Sigmoid colon (tissue), 7 donors: ENCODE measurements at regions of chr10 and their contacts with region 1.

Region 1: DNA sequence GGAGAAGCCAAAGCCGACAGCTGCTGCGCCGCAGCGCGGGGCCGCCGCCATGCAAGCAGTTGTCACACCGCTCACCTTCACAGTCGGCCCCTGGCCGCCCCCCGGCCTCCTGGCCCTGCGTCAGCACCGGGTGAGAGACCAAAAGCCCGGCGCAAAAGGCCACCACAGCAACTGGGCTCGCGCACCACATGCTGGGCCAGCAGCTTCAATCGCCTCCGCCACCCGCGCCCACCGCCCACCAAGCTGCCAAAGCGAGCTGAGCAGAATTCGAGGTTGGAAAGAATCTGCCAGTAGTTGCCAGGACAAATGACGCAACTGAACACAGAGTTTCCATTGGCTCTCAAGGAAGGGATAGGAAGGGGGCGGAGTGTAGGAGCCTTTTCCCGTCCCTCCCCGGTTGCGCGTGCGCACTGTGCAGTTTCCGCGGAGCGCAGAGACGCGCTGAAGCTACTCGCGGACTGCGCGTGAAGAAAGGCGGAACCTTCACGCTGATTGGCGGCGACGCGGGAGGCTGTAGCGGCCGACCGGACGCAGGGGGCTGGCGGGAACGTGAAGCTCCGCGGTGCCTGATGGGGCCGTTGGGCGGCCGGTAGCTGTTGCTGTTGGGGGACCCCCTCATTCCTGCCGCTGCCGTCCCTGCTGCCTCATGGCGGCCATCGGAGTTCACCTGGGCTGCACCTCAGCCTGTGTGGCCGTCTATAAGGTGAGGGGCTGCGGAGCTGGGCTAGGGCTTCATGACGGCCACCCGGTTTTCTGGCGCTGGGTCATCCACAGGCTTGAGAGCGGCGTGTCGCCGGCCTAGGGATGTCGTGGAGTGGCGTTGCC is at the starts of genes CDNF, HSPA14 and MSANTD7:
- DNase-seq: peak; percentile 100
- H3K4me3 ChIP-seq: peak within 1 kb of the TSS; percentile 86 to 95 (median 90)
- H3K27ac ChIP-seq: peak within 1 kb of the TSS; percentile 90 to 96 (median 95)
- H3K4me1 ChIP-seq: peaks cover 0 to 27% (median 17%) of the 10 kb centered on the region in 4 donors
- H3K27me3 ChIP-seq: no peaks in the 10 kb centered on the region
- CTCF ChIP-seq: no peak
- EP300 ChIP-seq: peak in 1 of 4 donors; percentile 52
- POLR2A ChIP-seq: peak; percentile 58 to 75
- total RNA-seq, gene CDNF: 1.5 to 2.9 (median 2.2) TPM in 3 of 4 donors, not detected in the other
- total RNA-seq, gene HSPA14: 10.0 to 13.4 (median 11.6) TPM
- total RNA-seq, gene MSANTD7: 4.7 to 8.1 (median 5.8) TPM

Region 2: GRCh38 chr10:13299437-13300287 is 1538.3 kb before region 1 on chr10 and contains the start of gene PHYH:
- intact Hi-C with region 1: no loop called
- DNase-seq: peak; percentile 97
- H3K4me3 ChIP-seq: peak within 1 kb of the TSS; percentile 74 to 95 (median 90)
- H3K27ac ChIP-seq: peak within 1 kb of the TSS; percentile 100
- H3K4me1 ChIP-seq: peaks cover 0 to 35% (median 19%) of the 10 kb centered on the region in 4 donors
- H3K27me3 ChIP-seq: no peaks in the 10 kb centered on the region
- CTCF ChIP-seq: no peak
- EP300 ChIP-seq: peak in 1 of 4 donors; percentile 60
- POLR2A ChIP-seq: peak; percentile 50 to 70
- total RNA-seq, gene PHYH: 39.9 to 48.1 (median 41.6) TPM

Region 3: DNA sequence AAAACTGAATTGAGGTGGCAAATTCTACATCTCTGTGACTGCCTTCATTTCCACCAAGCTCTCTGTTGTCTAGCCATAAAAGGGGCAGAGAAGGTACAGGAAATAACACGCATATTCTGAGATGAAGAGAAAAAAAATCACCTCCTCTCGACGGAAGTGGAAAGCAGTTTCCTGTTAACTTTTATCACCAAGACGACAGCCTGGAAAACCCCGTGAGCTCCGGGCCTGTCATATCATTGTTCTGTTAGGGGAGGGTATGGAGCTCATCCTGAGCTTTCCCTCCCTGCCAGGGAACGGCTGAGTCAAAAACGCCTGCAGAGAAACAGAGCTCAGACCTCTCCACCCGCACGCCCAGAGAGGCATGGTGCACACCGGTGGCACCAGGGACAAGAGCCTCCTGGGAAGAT is 1051.0 kb before region 1 on chr10:
- intact Hi-C with region 1: loop called (anchors 10 kb)
- DNase-seq: no peak
- H3K4me3 ChIP-seq: no peak overlapping the region
- H3K27ac ChIP-seq: peak overlapping the region; percentile 18 to 72 (median 32)
- H3K4me1 ChIP-seq: peaks cover 0 to 29% (median 15%) of the 10 kb centered on the region in 4 donors
- H3K27me3 ChIP-seq: no peaks in the 10 kb centered on the region
- CTCF ChIP-seq: no peak
- EP300 ChIP-seq: no peak
- POLR2A ChIP-seq: no peak

Region 4: DNA sequence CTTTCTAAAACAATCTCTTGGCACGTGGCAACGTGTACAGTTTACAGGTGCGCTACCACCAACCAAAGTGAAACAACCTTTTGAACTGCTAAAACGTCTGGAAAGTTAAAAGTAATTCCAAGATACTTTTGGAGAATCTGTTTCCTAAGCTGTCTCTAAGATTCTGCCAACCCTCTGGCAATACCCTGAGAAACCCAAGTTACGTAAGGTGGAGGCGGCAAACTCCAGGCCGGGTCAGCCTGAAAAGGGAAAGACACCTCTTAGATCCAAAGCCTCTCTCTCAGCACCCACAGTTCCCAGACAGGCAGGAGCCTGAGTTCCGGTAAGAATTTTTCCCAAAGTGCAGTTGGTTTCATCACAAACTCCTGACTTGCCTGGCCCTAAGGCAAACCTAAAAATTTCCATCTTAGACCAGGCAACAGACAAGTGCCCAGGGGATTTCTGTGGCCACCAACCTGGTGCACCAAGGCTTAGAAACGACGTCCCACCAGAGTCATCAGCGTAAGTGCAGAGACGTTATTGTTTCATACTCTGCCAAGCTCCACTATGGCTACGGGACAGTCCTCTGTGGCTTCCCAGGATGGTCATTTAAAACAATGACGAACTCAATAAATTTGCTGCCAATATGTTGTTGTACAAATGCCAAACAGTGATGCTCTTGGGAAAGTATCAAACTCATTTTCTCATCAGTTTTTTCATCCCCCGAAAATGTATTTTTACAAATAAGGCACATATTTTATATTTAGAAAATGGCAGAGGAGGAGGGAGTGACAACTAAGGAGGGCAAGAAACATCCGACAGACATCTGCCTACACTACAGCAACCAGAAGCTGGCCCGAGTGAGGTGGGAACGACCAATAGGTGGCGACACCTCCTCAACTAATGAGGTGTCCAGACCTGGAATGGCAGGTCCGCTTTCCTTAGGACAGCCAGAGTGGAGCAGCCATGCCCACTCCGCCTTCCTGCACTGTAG is 301.4 kb before region 1 on chr10:
- intact Hi-C with region 1: loop called (anchors 5 kb)
- DNase-seq: peak; percentile 82
- H3K4me3 ChIP-seq: no peak overlapping the region
- H3K27ac ChIP-seq: no peak overlapping the region
- H3K4me1 ChIP-seq: peaks cover 0 to 5% (median 0%) of the 10 kb centered on the region in 4 donors
- H3K27me3 ChIP-seq: no peaks in the 10 kb centered on the region
- CTCF ChIP-seq: peak; percentile 40 to 64 (median 44)
- EP300 ChIP-seq: no peak
- POLR2A ChIP-seq: no peak

Region 5: GRCh38 chr10:14665304-14665703 is 172.7 kb before region 1 on chr10:
- intact Hi-C with region 1: loop called (anchors 5 kb)
- DNase-seq: no peak
- H3K4me3 ChIP-seq: no peak overlapping the region
- H3K27ac ChIP-seq: peak overlapping the region in 2 of 4 donors; percentile 40 to 63
- H3K4me1 ChIP-seq: peaks cover 0 to 51% (median 45%) of the 10 kb centered on the region in 4 donors
- H3K27me3 ChIP-seq: no peaks in the 10 kb centered on the region
- CTCF ChIP-seq: no peak
- EP300 ChIP-seq: no peak
- POLR2A ChIP-seq: no peak

Region 6: DNA sequence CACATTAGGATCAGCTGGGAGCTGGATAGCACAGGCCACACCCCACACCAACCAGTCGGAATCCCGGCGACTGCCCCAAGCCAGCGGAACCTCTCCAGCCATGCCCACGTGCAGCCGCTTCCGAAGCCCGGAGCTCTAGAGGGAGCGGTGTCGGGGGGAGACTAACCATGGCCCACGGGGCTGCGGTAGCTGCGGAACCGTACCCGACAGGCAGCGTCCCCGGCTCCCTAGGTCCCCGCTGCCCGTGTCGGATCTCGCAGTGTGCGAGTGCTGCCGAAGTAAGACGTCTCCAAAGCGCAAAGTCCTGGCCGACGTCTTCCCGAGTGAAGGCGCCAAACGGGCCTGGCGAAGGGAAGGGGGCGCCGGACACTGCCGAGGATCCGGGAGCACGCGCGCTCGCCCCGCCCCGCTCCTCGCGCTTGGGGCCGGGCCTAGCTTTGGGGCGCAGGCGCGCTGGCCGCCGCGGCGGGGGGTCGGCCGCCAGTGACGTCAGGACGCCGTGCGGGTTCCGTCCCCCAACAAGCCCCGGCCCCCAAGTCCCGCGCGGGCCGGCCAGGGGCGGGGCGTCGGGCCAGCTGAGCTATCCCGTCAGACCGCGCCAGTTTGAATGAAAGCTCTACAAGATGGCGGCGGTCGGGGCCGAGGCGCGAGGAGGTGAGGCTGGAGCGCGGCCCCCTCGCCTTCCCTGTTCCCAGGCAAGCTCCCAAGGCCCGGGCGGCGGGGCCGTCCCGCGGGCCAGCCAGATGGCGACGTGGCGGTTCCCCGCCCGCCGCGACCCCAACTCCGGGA is 40.5 kb after region 1 on chr10 and contains the start of gene SUV39H2:
- intact Hi-C with region 1: loop called (anchors 2 kb)
- DNase-seq: peak; percentile 98
- H3K4me3 ChIP-seq: peak within 1 kb of the TSS; percentile 58 to 99 (median 82)
- H3K27ac ChIP-seq: peak within 1 kb of the TSS; percentile 94 to 95 (median 94)
- H3K4me1 ChIP-seq: peaks cover 0 to 32% (median 17%) of the 10 kb centered on the region in 4 donors
- H3K27me3 ChIP-seq: no peaks in the 10 kb centered on the region
- CTCF ChIP-seq: no peak
- EP300 ChIP-seq: no peak
- POLR2A ChIP-seq: peak; percentile 40 to 45
- total RNA-seq, gene SUV39H2: 3.9 to 6.4 (median 5.3) TPM

Region 7: GRCh38 chr10:14959276-14960057 is 121.5 kb after region 1 on chr10 and contains the start of gene MEIG1:
- intact Hi-C with region 1: loop called (anchors 5 kb)
- DNase-seq: peak; percentile 97
- H3K4me3 ChIP-seq: peak within 1 kb of the TSS; percentile 62 to 71 (median 70)
- H3K27ac ChIP-seq: peak within 1 kb of the TSS; percentile 90 to 97 (median 95)
- H3K4me1 ChIP-seq: peaks cover 0 to 15% (median 8%) of the 10 kb centered on the region in 4 donors
- H3K27me3 ChIP-seq: no peaks in the 10 kb centered on the region
- CTCF ChIP-seq: no peak
- EP300 ChIP-seq: no peak
- POLR2A ChIP-seq: peak in 1 of 2 donors; percentile 39
- total RNA-seq, gene MEIG1: 1.3 TPM in 1 of 4 donors, not detected in the others

Region 8: DNA sequence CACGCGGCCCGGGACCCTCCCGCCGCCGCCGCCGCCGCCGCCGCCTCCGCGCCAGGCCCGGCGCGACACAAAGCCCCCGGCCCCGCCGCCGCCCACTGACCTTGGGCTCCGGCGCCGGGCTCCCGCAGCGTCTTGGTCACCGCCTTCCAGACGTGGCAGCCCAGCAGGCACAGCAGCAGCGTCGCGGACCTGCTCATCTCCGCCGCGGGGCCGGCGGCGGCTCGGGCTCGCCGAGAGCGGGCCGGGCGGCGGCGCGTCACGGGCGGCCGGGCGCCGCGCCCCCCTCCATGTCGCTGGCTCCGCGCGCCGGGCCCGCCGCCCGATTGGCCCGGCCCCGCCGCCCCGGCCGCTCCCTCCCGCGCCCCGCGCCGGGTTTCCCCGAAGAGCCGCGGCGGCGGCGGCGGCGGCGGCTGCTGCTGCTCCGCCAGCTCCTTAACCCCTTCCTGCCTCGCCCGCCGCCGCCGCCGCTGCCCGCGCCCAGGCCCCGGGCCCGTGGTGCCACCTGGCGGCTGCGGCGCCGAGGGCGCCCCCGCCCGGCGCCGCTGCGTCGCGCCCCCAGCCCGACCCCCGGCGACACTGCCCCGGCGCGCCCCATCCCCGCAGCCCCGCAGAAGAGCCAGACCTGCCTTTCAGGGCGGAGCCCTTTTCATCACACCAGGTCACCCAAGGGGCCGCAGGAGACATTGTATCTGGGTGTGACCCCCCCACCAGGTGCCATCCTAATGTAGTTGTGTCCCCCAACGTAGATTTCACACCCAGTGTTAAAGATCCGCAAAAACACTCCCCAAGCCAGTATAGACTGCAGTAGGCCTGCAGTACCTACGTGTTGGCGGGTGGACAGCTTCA is 533.1 kb after region 1 on chr10 and contains the start of gene FAM171A1:
- intact Hi-C with region 1: loop called (anchors 5 kb)
- DNase-seq: peak; percentile 73
- H3K4me3 ChIP-seq: peak within 1 kb of the TSS; percentile 55 to 86 (median 78)
- H3K27ac ChIP-seq: peak within 1 kb of the TSS; percentile 39 to 77 (median 74)
- H3K4me1 ChIP-seq: peaks cover 0 to 17% (median 8%) of the 10 kb centered on the region in 4 donors
- H3K27me3 ChIP-seq: no peaks in the 10 kb centered on the region
- CTCF ChIP-seq: no peak
- EP300 ChIP-seq: no peak
- POLR2A ChIP-seq: no peak
- total RNA-seq, gene FAM171A1: 4.3 to 9.7 (median 6.4) TPM